Naive thymus-derived CD4-positive, alpha-beta T cell (primary cell): ENCODE measurements at regions of chr13 and their contacts with region 1.

Region 1: DNA sequence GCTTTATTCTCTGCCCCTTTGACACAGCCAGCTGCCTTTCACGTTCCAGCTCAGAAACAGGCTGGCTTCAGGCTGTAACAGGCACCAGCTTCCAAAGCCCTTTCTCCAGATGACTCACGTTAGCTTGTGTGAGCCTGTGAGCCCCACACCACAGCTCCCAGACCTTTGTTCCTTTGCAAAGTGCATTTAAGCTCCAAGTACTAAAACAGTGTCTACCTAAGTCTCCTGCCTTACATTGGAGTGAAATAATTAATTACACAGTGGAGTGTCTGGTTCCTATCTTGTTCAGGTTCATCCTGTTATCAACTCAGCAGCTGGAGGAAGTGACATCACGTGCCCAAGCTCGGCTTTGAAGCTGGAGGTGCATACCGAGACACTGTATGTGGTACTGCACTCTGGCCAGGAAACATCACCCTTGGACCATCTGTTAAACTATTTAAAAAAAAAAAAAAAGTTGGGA is 475.8 kb downstream of the FOXO1 start:
- DNase-seq: peak in 8 of 9 donors; percentile 36 to 87 (median 80)
- ATAC-seq: peak; percentile 49
- H3K4me3 ChIP-seq: peak overlapping the region; percentile 24
- H3K4me3 Mint-ChIP-seq: peak overlapping the region; percentile 74 to 89 (median 81)
- H3K27ac ChIP-seq: peak overlapping the region; percentile 63
- H3K27ac Mint-ChIP-seq: peak overlapping the region; percentile 96 to 100 (median 97)
- H3K4me1 ChIP-seq: peaks cover 55 to 69% of the 10 kb centered on the region in 2 donors
- H3K4me1 Mint-ChIP-seq: peaks cover 47 to 97% (median 87%) of the 10 kb centered on the region in 7 donors
- H3K27me3 ChIP-seq: no peaks in the 10 kb centered on the region
- H3K27me3 Mint-ChIP-seq: no peaks in the 10 kb centered on the region

Region 2: DNA sequence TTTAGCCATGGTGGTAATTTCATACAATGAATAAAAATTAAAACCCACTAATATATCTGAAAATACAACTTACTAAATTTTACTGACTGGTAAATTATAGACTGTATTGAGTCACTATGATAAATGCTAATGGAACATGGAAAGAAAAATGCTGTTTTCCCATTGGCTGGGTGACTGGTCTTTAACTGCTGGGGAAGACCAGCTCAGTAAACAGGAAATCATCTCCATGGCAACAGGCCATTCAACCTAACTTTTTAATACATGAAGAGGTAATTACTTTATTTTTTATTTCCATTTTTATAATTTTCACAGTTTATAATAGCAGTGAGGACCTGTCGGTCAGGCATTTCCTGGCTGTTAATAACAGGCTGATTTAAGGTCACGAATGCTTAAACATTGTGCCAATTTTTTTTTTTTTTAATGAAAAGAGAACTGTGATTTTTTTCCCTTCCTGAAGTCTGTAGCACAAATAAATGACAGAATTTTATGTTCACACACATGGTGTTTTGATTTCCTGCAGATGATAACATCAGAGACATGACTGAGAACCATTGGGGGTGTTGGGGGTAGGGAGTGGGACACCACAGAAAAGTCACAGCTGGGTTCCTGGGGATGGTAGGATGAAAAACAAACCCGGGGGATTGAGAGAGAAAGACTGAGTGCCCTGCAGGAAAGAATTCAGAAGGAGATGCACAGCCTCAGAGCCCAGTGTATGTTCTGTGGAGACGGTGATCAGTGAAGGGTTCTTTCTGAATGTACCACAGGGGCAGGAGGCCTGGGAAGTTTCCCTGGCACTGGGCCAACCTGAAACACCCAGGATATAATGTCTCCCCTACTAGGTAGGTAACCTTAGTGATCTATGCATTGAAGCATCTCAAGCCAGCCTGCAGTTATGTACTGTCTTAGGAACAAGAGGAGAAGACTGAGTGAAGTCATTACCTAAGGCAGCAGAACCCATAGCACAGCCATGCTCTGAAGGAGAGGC is 238.1 kb before region 1 on chr13:
- CTCF ChIA-PET with region 1: interaction called, 3 read pairs
- POLR2A ChIA-PET with region 1: no interaction called
- intact Hi-C with region 1: loop called in 1 of 2 experiments (anchors 5 kb)
- DNase-seq: peak in 2 of 9 donors; percentile 11 to 23
- ATAC-seq: peak; percentile 46
- H3K4me3 ChIP-seq: no peak overlapping the region
- H3K4me3 Mint-ChIP-seq: peak overlapping the region in 9 of 10 donors; percentile 13 to 74 (median 53)
- H3K27ac ChIP-seq: no peak overlapping the region
- H3K27ac Mint-ChIP-seq: peak overlapping the region; percentile 34 to 89 (median 82)
- H3K4me1 ChIP-seq: peaks cover 13 to 17% of the 10 kb centered on the region in 2 donors
- H3K4me1 Mint-ChIP-seq: peaks cover 27 to 60% (median 50%) of the 10 kb centered on the region in 7 donors
- H3K27me3 ChIP-seq: no peaks in the 10 kb centered on the region
- H3K27me3 Mint-ChIP-seq: peaks cover 0 to 6% (median 0%) of the 10 kb centered on the region in 5 donors

Region 3: GRCh38 chr13:40132249-40132648 is 58.4 kb before region 1 on chr13:
- CTCF ChIA-PET with region 1: no interaction called
- POLR2A ChIA-PET with region 1: no interaction called
- intact Hi-C with region 1: loop called (anchors 1 to 2 kb)
- DNase-seq: peak in 1 of 9 donors; percentile 48
- ATAC-seq: no peak
- H3K4me3 ChIP-seq: no peak overlapping the region
- H3K4me3 Mint-ChIP-seq: peak overlapping the region in 1 of 10 donors; percentile 45
- H3K27ac ChIP-seq: no peak overlapping the region
- H3K27ac Mint-ChIP-seq: peak overlapping the region in 1 of 9 donors; percentile 77
- H3K4me1 ChIP-seq: peaks cover 0 to 5% of the 10 kb centered on the region in 2 donors
- H3K4me1 Mint-ChIP-seq: peaks cover 11 to 50% (median 13%) of the 10 kb centered on the region in 7 donors
- H3K27me3 ChIP-seq: no peaks in the 10 kb centered on the region
- H3K27me3 Mint-ChIP-seq: no peaks in the 10 kb centered on the region

Region 4: DNA sequence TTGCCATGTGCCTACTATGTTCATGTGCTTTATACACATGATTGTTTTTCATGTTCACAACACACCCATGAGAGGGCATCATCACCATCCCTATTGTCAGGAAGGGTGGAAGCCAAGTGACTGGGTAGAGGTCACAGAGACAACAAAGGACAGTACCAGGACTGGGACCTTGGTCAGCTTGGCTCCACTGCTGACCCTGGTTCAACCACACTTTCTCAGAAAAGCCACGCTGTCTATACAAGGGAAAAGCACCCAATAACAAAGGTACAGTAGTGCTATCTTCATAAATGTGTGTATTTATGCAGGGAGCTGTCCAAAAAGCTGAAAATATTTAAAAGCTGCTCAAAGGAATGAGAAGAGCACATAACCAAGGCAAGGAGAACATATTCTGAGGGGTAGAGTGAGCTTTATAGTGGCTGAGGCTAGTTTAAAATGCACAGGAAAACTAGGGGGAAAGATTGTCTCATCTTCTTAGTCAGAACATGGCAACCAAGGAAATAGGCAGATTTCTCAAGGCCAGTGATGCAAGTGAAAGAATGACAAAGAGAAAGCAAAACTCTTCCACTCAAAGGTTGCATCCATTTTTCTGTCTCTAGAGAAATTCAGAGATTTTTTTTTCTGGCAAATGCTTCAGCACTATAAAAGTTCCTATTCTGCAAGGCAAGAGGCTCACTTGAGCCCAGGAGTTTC is 60.8 kb after region 1 on chr13:
- CTCF ChIA-PET with region 1: no interaction called
- POLR2A ChIA-PET with region 1: interaction called, 5 read pairs
- intact Hi-C with region 1: loop called in 1 of 2 experiments (anchors 2 kb)
- DNase-seq: peak in 4 of 9 donors; percentile 7 to 15 (median 12)
- ATAC-seq: no peak
- H3K4me3 ChIP-seq: no peak overlapping the region
- H3K4me3 Mint-ChIP-seq: peak overlapping the region in 3 of 10 donors; percentile 1 to 16 (median 2)
- H3K27ac ChIP-seq: no peak overlapping the region
- H3K27ac Mint-ChIP-seq: peak overlapping the region in 6 of 9 donors; percentile 4 to 65 (median 10)
- H3K4me1 ChIP-seq: peaks cover 0 to 12% of the 10 kb centered on the region in 2 donors
- H3K4me1 Mint-ChIP-seq: peaks cover 8 to 39% (median 34%) of the 10 kb centered on the region in 7 donors
- H3K27me3 ChIP-seq: no peaks in the 10 kb centered on the region
- H3K27me3 Mint-ChIP-seq: no peaks in the 10 kb centered on the region

Region 5: GRCh38 chr13:40440990-40441820 is 250.5 kb after region 1 on chr13:
- CTCF ChIA-PET with region 1: no interaction called
- POLR2A ChIA-PET with region 1: no interaction called
- intact Hi-C with region 1: loop called in 1 of 2 experiments (anchors 2 kb)
- DNase-seq: no peak
- ATAC-seq: no peak
- H3K4me3 ChIP-seq: no peak overlapping the region
- H3K4me3 Mint-ChIP-seq: no peak overlapping the region
- H3K27ac ChIP-seq: no peak overlapping the region
- H3K27ac Mint-ChIP-seq: no peak overlapping the region
- H3K4me1 ChIP-seq: peaks cover 4 to 24% of the 10 kb centered on the region in 2 donors
- H3K4me1 Mint-ChIP-seq: peaks cover 16 to 33% (median 28%) of the 10 kb centered on the region in 7 donors
- H3K27me3 ChIP-seq: no peaks in the 10 kb centered on the region
- H3K27me3 Mint-ChIP-seq: no peaks in the 10 kb centered on the region

Region 6: GRCh38 chr13:40682449-40683240 is 492.0 kb after region 1 on chr13:
- CTCF ChIA-PET with region 1: interaction called, 4 read pairs
- POLR2A ChIA-PET with region 1: no interaction called
- intact Hi-C with region 1: loop called in 1 of 2 experiments (anchors 1 kb)
- DNase-seq: peak in 6 of 9 donors; percentile 32 to 60 (median 52)
- ATAC-seq: peak; percentile 52
- H3K4me3 ChIP-seq: no peak overlapping the region
- H3K4me3 Mint-ChIP-seq: peak overlapping the region in 5 of 10 donors; percentile 2 to 45 (median 18)
- H3K27ac ChIP-seq: no peak overlapping the region
- H3K27ac Mint-ChIP-seq: peak overlapping the region in 2 of 9 donors; percentile 37 to 45
- H3K4me1 ChIP-seq: peaks cover 0 to 6% of the 10 kb centered on the region in 2 donors
- H3K4me1 Mint-ChIP-seq: peaks cover 8 to 17% (median 14%) of the 10 kb centered on the region in 7 donors
- H3K27me3 ChIP-seq: no peaks in the 10 kb centered on the region
- H3K27me3 Mint-ChIP-seq: no peaks in the 10 kb centered on the region

Region 7: GRCh38 chr13:41122838-41123237 is 932.2 kb after region 1 on chr13:
- CTCF ChIA-PET with region 1: no interaction called
- POLR2A ChIA-PET with region 1: no interaction called
- intact Hi-C with region 1: no loop called
- DNase-seq: peak in 7 of 9 donors; percentile 24 to 63 (median 42)
- ATAC-seq: peak; percentile 66
- H3K4me3 ChIP-seq: no peak overlapping the region
- H3K4me3 Mint-ChIP-seq: no peak overlapping the region
- H3K27ac ChIP-seq: no peak overlapping the region
- H3K27ac Mint-ChIP-seq: peak overlapping the region in 7 of 9 donors; percentile 19 to 84 (median 62)
- H3K4me1 ChIP-seq: no peaks in the 10 kb centered on the region
- H3K4me1 Mint-ChIP-seq: peaks cover 1 to 18% (median 10%) of the 10 kb centered on the region in 7 donors
- H3K27me3 ChIP-seq: no peaks in the 10 kb centered on the region
- H3K27me3 Mint-ChIP-seq: no peaks in the 10 kb centered on the region